ENCODE measurements at regions of chrX and their contacts with region 1.

Region 1: GRCh38 chrX:39652336-39653131 is 445.2 kb downstream of the BCOR start:
- DNase-seq: no peak
- H3K4me3 ChIP-seq: no peak overlapping the region
- H3K27ac ChIP-seq: no peak overlapping the region
- H3K4me1 ChIP-seq: no peaks in the 10 kb centered on the region
- H3K27me3 ChIP-seq: peaks cover 0 to 78% of the 10 kb centered on the region in 2 donors
- CTCF ChIP-seq: peak in 1 of 3 donors; percentile 14
- POLR2A ChIP-seq: no peak

Region 2: DNA sequence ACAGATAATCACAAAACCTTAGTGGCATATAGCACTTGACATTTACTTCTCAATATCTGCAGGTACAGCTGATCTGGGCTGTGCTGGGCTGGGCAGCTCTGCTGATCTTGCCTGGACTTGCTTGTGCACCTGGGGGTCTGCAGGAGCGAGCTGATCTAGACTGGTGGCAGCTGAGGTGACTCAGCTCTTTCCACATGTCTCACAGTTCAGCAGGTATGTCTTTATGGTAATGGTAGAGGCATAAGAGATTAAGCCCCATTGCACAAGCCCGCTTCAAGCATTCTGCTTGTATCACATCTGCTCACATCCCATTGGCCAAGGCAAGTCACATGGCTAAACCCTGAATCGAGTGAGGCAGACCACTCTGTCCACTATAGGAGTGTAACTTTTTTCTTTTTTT is 61.4 kb before region 1 on chrX:
- intact Hi-C with region 1: no loop called
- DNase-seq: no peak
- H3K4me3 ChIP-seq: no peak overlapping the region
- H3K27ac ChIP-seq: no peak overlapping the region
- H3K4me1 ChIP-seq: no peaks in the 10 kb centered on the region
- H3K27me3 ChIP-seq: peaks cover 0 to 71% of the 10 kb centered on the region in 2 donors
- CTCF ChIP-seq: no peak
- POLR2A ChIP-seq: no peak

Region 3: DNA sequence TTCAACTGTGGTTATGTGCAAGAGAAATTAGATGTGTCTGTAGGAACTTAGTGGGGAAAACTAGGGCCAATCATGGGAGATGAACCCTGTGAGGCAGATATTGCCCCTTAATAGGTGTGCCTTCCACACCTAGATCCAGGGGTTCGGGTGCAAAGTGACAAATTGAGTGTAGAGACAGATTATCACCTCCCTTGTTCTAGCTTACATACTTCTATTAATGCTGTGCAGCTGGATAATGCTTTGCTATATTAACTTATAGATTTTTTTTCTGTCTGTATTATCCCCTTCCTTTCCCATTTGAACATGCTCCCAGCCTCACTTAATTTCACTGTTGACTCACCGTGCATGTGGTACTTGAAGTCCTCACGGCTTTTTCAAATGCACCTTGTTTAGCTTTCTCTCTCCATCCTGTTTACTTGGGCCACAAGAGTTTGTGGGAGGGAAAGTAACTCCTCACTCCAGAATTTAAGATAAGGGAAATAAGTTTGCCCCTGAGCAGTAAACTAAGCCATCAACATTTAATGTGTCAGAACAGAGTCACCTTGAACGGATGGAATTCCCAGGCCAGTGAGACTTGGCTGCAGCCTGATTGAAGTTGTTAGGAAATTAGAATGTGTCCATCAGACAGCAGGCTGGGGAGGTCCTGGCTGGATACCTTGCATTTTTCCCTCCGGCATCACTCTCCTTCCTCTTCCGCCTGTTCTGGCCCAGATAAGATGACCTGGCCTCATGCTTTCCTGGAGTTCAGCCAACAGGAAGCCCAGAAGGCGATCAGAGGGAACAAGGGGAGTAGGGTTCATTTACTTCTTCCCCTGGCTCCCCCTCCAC is 33.1 kb before region 1 on chrX:
- intact Hi-C with region 1: loop called (anchors 1 kb)
- DNase-seq: no peak
- H3K4me3 ChIP-seq: no peak overlapping the region
- H3K27ac ChIP-seq: no peak overlapping the region
- H3K4me1 ChIP-seq: no peaks in the 10 kb centered on the region
- H3K27me3 ChIP-seq: peaks cover 0 to 24% of the 10 kb centered on the region in 2 donors
- CTCF ChIP-seq: no peak
- POLR2A ChIP-seq: no peak

Region 4: DNA sequence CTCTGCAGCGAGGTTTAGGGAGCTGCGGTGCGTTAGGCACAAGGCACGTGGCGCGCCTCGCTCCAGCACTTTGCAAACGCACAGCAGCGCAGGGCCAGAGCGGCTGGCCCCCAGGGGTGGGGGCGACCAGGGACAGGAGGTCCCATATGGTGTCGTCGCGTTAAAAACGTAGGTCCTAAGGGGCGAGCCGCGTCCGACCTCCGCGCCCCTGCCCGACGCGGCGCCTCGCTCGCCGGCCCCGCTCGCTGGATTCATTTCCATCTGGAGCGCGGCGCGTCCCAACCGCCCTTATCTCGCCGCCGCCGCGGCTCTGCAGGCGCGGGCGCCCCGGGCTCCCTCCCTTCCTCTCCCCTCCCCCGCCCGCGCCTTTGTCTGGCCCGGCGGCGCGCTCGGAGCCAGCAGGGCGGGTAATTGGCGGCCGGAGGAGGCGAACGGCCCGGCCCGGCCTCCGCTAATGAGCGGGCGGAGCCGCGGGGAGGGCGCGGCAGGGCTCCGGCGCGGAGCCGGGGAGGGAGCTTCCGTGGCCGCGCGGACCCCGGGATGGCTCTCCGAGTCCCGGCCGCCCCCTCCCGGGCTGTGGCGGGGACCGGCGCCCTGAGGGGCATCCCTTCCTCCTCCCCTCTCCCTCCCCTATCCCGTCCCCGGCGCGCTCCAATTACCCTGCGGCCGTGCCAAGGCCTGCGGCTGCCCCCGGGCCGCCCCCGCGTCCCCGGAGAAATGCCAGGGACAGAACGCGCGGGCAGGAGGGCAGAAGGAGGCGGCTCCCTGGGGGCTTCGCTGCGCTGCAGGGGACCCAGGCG is 36.2 kb after region 1 on chrX:
- intact Hi-C with region 1: no loop called
- DNase-seq: no peak
- H3K4me3 ChIP-seq: peak overlapping the region; percentile 42 to 66 (median 45)
- H3K27ac ChIP-seq: peak overlapping the region; percentile 48 to 66
- H3K4me1 ChIP-seq: no peaks in the 10 kb centered on the region
- H3K27me3 ChIP-seq: peaks cover 0 to 81% of the 10 kb centered on the region in 2 donors
- CTCF ChIP-seq: no peak
- POLR2A ChIP-seq: no peak

Measured in breast epithelium (tissue), 4 donors.